CD8-positive, alpha-beta T cell (primary cell): ENCODE measurements at regions of chr13 and their contacts with region 1.

Region 1: GRCh38 chr13:100674848-100675660 is 459 bp upstream of the TMTC4 start:
- DNase-seq: peak; percentile 99 to 100 (median 100)
- ATAC-seq: peak; percentile 92
- H3K4me3 ChIP-seq: peak overlapping the region; percentile 88 to 98
- H3K4me3 Mint-ChIP-seq: peak overlapping the region; percentile 95
- H3K27ac ChIP-seq: peak overlapping the region; percentile 55 to 78
- H3K27ac Mint-ChIP-seq: peak overlapping the region; percentile 89
- H3K4me1 ChIP-seq: peaks cover 14% of the 10 kb centered on the region
- H3K4me1 Mint-ChIP-seq: peaks cover 29% of the 10 kb centered on the region
- H3K27me3 ChIP-seq: no peaks in the 10 kb centered on the region
- H3K27me3 Mint-ChIP-seq: no peaks in the 10 kb centered on the region
- CTCF ChIP-seq: no peak

Region 2: DNA sequence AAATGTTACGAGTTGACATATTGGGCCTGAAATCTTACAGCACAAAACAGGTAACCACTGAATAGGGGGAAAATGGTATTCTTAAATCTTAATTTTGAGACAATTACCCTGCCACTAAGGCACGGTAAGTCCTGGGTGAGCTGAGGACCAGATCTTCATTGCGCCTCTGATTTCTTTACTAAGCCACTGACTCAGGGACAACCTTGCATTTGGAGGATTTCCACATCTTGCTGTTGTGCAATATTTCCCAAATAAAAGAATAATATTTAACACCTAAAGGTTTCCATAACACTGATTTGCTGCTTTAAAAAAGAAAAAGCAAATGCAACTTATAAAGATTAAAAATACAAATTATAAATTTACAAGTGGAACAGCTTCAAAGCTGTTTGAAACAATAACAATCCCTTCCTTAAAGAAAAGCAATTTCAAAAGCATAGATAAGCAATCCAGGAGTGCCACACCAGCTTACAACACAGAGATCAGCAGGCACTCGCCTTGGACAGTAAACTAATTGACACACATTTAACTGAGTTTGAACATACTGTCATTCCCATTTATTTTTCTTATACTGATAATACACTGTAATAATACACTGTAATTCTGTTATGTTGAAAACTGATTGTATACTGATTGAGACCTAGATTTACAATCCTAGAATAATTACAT is 1617.6 kb before region 1 on chr13:
- CTCF ChIA-PET with region 1: no interaction called
- POLR2A ChIA-PET with region 1: no interaction called
- intact Hi-C with region 1: loop called in 1 of 2 experiments (anchors 5 kb)
- DNase-seq: peak in 1 of 9 experiments; percentile 15
- ATAC-seq: no peak
- H3K4me3 ChIP-seq: no peak overlapping the region
- H3K4me3 Mint-ChIP-seq: no peak overlapping the region
- H3K27ac ChIP-seq: no peak overlapping the region
- H3K27ac Mint-ChIP-seq: peak overlapping the region; percentile 47
- H3K4me1 ChIP-seq: peaks cover 68% of the 10 kb centered on the region
- H3K4me1 Mint-ChIP-seq: peaks cover 86% of the 10 kb centered on the region
- H3K27me3 ChIP-seq: no peaks in the 10 kb centered on the region
- H3K27me3 Mint-ChIP-seq: no peaks in the 10 kb centered on the region
- CTCF ChIP-seq: no peak

Region 3: DNA sequence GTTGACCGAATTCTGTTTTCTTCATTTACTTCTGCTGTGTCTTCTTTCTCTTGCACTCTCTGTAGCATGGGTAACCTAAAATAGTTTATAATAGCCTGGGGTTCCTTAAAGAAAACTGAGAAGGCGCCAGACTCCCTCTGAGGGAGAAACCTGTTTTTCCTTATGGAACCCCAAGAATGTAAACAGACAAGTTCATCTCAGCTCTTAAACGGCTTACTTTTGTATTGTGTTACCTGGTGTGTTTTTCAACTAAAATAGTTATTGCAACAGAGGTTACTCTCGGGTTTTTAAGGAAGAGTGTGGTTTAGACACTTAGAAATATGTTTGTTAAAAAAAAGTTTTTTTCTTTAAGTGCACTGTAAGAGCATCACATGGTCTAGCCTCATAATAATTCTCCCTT is 1197.5 kb before region 1 on chr13:
- CTCF ChIA-PET with region 1: no interaction called
- POLR2A ChIA-PET with region 1: no interaction called
- intact Hi-C with region 1: no loop called
- DNase-seq: no peak
- ATAC-seq: no peak
- H3K4me3 ChIP-seq: no peak overlapping the region
- H3K4me3 Mint-ChIP-seq: no peak overlapping the region
- H3K27ac ChIP-seq: no peak overlapping the region
- H3K27ac Mint-ChIP-seq: no peak overlapping the region
- H3K4me1 ChIP-seq: no peaks in the 10 kb centered on the region
- H3K4me1 Mint-ChIP-seq: peaks cover 3% of the 10 kb centered on the region
- H3K27me3 ChIP-seq: no peaks in the 10 kb centered on the region
- H3K27me3 Mint-ChIP-seq: no peaks in the 10 kb centered on the region
- CTCF ChIP-seq: no peak

Region 4: GRCh38 chr13:99969919-99970621 is 705.0 kb before region 1 on chr13:
- CTCF ChIA-PET with region 1: no interaction called
- POLR2A ChIA-PET with region 1: no interaction called
- intact Hi-C with region 1: loop called in 1 of 2 experiments (anchors 10 kb)
- DNase-seq: peak in 5 of 9 experiments; percentile 46 to 63 (median 56)
- ATAC-seq: peak; percentile 57
- H3K4me3 ChIP-seq: peak overlapping the region; percentile 29 to 47
- H3K4me3 Mint-ChIP-seq: peak overlapping the region; percentile 82
- H3K27ac ChIP-seq: no peak overlapping the region
- H3K27ac Mint-ChIP-seq: no peak overlapping the region
- H3K4me1 ChIP-seq: peaks cover 26% of the 10 kb centered on the region
- H3K4me1 Mint-ChIP-seq: peaks cover 25% of the 10 kb centered on the region
- H3K27me3 ChIP-seq: peaks cover 67 to 70% of the 10 kb centered on the region in 2 experiments
- H3K27me3 Mint-ChIP-seq: peaks cover 67% of the 10 kb centered on the region
- CTCF ChIP-seq: no peak

Region 5: DNA sequence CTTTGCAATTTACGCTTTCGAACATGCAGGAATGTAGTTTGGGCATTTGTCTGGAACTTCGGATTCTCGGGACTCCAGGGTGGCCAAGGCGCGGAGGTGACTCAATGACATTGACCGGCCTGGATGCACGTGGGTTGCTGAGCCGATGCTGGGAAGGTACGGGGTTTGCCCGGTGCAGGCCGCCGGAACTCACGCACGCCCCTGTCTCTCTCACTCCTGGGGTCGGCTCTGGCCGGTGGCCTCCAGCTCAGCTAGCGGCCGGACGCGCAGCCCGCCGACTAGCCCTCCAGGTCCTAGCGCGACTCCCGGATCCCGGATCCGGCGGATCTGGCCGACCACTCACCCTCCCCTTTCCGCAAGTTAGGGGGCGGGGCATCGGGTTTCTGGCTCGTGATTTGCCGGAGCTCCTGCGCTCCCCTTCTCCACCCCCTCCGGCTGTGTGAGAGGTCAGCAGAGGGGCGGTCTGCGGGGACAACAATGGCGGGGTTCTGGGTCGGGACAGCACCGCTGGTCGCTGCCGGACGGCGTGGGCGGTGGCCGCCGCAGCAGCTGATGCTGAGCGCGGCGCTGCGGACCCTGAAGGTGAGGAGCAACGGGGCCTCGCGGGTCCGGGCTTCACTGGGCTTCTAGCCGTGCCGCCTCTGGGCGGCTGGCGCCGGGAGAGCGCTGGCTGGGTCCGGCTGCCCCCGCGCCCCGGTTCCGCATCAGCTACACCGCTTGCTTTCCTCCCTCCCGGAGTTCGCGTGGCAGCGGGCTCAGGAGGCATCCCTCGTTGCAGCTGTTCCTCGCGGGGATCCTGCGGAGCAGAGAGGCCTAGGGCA is 586.2 kb before region 1 on chr13 and contains the start of gene PCCA:
- CTCF ChIA-PET with region 1: no interaction called
- POLR2A ChIA-PET with region 1: no interaction called
- intact Hi-C with region 1: loop called in 1 of 2 experiments (anchors 2 kb)
- DNase-seq: peak; percentile 34 to 84 (median 78)
- ATAC-seq: peak; percentile 71
- H3K4me3 ChIP-seq: peak within 1 kb of the TSS; percentile 81 to 88
- H3K4me3 Mint-ChIP-seq: peak within 1 kb of the TSS; percentile 98
- H3K27ac ChIP-seq: peak within 1 kb of the TSS; percentile 35 to 40
- H3K27ac Mint-ChIP-seq: peak within 1 kb of the TSS; percentile 82
- H3K4me1 ChIP-seq: peaks cover 28% of the 10 kb centered on the region
- H3K4me1 Mint-ChIP-seq: peaks cover 30% of the 10 kb centered on the region
- H3K27me3 ChIP-seq: no peaks in the 10 kb centered on the region
- H3K27me3 Mint-ChIP-seq: no peaks in the 10 kb centered on the region
- CTCF ChIP-seq: no peak
- total RNA-seq, gene PCCA: 6.2 to 7.5 TPM

Region 6: DNA sequence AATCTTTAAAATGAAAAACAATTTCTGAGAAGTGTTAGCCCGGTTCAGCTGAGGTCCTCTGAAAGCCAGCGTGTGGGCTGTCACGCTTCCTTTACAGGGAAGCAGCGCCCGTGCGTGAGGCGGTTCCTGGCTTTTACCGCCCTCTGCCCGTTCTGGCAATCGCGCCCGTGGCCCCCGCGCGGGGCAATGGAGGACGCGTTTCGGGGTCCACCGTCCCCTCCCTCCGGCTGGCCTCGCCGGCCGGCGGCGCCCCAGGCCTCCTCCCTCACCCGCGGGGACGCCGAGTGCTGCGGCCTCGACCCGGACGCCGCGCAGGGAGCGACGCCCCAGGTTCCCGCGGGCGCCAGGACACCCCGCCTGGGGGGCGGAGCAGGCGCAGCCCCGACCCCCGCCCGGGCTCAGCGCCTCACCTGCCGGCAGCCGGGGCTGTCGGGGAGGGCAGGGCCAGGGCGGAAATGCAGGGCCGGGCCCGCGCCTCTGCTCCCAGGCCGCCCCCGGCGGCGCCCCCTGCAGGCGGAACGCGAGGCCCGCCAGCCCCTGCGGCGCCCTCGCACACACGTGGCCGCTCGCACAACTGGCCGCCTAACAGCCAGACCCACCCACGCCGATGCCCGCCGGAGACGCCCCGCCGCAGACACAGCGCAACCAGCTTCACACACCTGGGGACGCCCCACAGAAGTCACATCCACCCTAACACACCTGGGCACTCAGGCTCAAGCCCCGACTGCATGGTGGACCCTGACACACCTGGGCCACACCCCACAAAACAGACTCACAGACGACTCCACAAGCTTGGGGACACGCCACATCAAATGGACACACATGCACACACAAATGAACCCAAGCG is 86.5 kb before region 1 on chr13 and contains the start of gene GGACT:
- CTCF ChIA-PET with region 1: interaction called, 6 read pairs
- POLR2A ChIA-PET with region 1: interaction called, 17 read pairs
- intact Hi-C with region 1: loop called (anchors 1 to 2 kb)
- DNase-seq: peak; percentile 68 to 93 (median 85)
- ATAC-seq: peak; percentile 95
- H3K4me3 ChIP-seq: peak within 1 kb of the TSS; percentile 65 to 70
- H3K4me3 Mint-ChIP-seq: peak within 1 kb of the TSS; percentile 84
- H3K27ac ChIP-seq: peak within 1 kb of the TSS; percentile 80 to 82
- H3K27ac Mint-ChIP-seq: peak within 1 kb of the TSS; percentile 89
- H3K4me1 ChIP-seq: peaks cover 39% of the 10 kb centered on the region
- H3K4me1 Mint-ChIP-seq: peaks cover 44% of the 10 kb centered on the region
- H3K27me3 ChIP-seq: no peaks in the 10 kb centered on the region
- H3K27me3 Mint-ChIP-seq: no peaks in the 10 kb centered on the region
- CTCF ChIP-seq: peak; percentile 74
- total RNA-seq, gene GGACT: 0.98 to 1.1 TPM

Region 7: DNA sequence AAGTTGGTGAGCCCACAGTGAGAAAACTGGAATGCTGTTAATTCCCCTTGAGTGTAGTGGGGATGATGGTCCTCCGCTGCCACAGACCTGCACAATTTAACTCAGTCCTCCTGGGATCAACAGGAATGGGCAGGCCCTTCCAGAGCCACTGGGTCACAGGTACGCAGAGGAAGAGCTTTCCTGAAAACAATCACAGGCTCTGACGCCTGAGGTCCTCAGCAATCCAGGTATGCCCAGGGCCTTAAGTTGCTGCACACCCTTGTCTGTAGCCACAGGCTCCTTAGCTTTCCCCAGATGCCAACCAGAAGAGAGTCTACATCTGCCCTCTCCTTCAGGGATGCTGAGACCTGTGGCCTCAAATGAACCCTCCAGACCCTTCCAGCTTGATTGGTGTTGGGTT is 85.1 kb after region 1 on chr13:
- CTCF ChIA-PET with region 1: no interaction called
- POLR2A ChIA-PET with region 1: no interaction called
- intact Hi-C with region 1: no loop called
- DNase-seq: no peak
- ATAC-seq: no peak
- H3K4me3 ChIP-seq: no peak overlapping the region
- H3K4me3 Mint-ChIP-seq: no peak overlapping the region
- H3K27ac ChIP-seq: no peak overlapping the region
- H3K27ac Mint-ChIP-seq: no peak overlapping the region
- H3K4me1 ChIP-seq: no peaks in the 10 kb centered on the region
- H3K4me1 Mint-ChIP-seq: no peaks in the 10 kb centered on the region
- H3K27me3 ChIP-seq: no peaks in the 10 kb centered on the region
- H3K27me3 Mint-ChIP-seq: peaks cover 11% of the 10 kb centered on the region
- CTCF ChIP-seq: no peak